CD8-positive, alpha-beta T cell (primary cell): ENCODE measurements at regions of chr11 and their contacts with region 1.

Region 1: DNA sequence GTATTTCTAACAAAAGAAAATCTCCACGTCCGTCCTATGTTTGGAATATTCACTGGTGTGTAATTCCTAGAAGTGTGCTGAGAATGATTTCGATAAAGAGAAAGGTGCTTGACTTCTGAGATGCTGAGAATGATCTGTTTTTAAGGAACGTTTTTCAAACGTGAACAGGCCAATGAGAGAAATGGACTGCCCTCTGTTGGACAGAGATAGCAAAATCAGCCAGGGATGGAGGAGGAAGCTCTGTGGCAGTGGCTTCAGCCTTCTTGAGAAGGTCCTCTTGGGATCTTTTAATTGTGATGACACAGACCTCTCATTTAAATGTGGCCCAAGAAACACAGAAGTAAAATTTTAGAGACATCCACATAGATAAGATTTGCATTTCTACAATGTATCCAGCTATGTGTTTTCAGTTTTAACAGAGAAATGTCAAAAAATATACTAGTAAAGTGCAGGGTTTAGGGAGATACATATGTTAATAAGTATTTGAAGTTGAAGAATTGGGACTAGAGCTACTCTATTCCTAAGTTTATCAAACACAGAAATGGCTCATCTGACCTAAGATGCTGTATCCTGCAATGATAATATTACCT is 84.0 kb upstream of the RCN1 start:
- DNase-seq: peak in 3 of 9 experiments; percentile 5 to 52 (median 43)
- ATAC-seq: no peak
- H3K4me3 ChIP-seq: no peak overlapping the region
- H3K4me3 Mint-ChIP-seq: no peak overlapping the region
- H3K27ac ChIP-seq: no peak overlapping the region
- H3K27ac Mint-ChIP-seq: no peak overlapping the region
- H3K4me1 ChIP-seq: no peaks in the 10 kb centered on the region
- H3K4me1 Mint-ChIP-seq: no peaks in the 10 kb centered on the region
- H3K27me3 ChIP-seq: peaks cover 0 to 5% of the 10 kb centered on the region in 2 experiments
- H3K27me3 Mint-ChIP-seq: peaks cover 25% of the 10 kb centered on the region
- CTCF ChIP-seq: peak; percentile 32

Region 2: DNA sequence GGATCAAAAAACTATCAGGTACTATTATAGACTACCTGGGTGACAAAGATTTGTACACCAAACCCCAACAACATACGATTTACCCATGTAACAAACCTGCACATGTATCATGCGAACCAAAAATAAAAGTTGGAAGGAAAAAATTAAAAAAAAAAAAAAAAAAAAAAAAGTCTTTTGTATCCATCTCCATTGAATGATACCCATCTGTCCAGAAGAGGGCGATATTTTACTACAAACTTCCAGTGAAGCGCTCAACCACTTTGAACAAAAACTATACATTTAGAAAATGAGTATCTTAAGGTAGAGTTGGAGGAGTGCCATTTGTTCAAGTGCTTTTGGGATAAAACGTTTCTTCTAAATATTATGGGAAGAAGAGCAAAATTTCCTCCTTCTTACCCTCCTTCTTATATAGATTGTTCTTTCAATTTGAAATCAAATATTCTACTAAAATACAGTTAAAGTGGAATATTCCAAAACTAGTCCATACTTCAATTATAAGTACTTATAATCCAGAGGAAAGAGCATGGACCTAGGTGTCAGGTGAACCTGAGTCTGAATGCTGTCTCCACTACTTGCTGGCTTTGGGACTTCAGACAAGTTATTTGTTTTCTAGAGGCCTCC is 1660.7 kb before region 1 on chr11:
- CTCF ChIA-PET with region 1: no interaction called
- POLR2A ChIA-PET with region 1: no interaction called
- intact Hi-C with region 1: loop called in 1 of 2 experiments (anchors 5 kb)
- DNase-seq: peak in 2 of 9 experiments; percentile 65 to 75
- ATAC-seq: peak; percentile 58
- H3K4me3 ChIP-seq: no peak overlapping the region
- H3K4me3 Mint-ChIP-seq: no peak overlapping the region
- H3K27ac ChIP-seq: no peak overlapping the region
- H3K27ac Mint-ChIP-seq: no peak overlapping the region
- H3K4me1 ChIP-seq: peaks cover 17% of the 10 kb centered on the region
- H3K4me1 Mint-ChIP-seq: peaks cover 16% of the 10 kb centered on the region
- H3K27me3 ChIP-seq: no peaks in the 10 kb centered on the region
- H3K27me3 Mint-ChIP-seq: no peaks in the 10 kb centered on the region
- CTCF ChIP-seq: peak; percentile 78

Region 3: GRCh38 chr11:31240338-31240904 is 766.5 kb before region 1 on chr11:
- CTCF ChIA-PET with region 1: interaction called, 3 read pairs
- POLR2A ChIA-PET with region 1: no interaction called
- intact Hi-C with region 1: loop called (anchors 5 kb)
- DNase-seq: peak in 4 of 9 experiments; percentile 4 to 49 (median 22)
- ATAC-seq: no peak
- H3K4me3 ChIP-seq: no peak overlapping the region
- H3K4me3 Mint-ChIP-seq: no peak overlapping the region
- H3K27ac ChIP-seq: no peak overlapping the region
- H3K27ac Mint-ChIP-seq: no peak overlapping the region
- H3K4me1 ChIP-seq: no peaks in the 10 kb centered on the region
- H3K4me1 Mint-ChIP-seq: no peaks in the 10 kb centered on the region
- H3K27me3 ChIP-seq: no peaks in the 10 kb centered on the region
- H3K27me3 Mint-ChIP-seq: peaks cover 4% of the 10 kb centered on the region
- CTCF ChIP-seq: peak; percentile 58

Region 4: GRCh38 chr11:31397239-31397834 is 609.6 kb before region 1 on chr11:
- CTCF ChIA-PET with region 1: no interaction called
- POLR2A ChIA-PET with region 1: no interaction called
- intact Hi-C with region 1: loop called in 1 of 2 experiments (anchors 2 kb)
- DNase-seq: peak in 2 of 9 experiments; percentile 22 to 48
- ATAC-seq: no peak
- H3K4me3 ChIP-seq: no peak overlapping the region
- H3K4me3 Mint-ChIP-seq: no peak overlapping the region
- H3K27ac ChIP-seq: no peak overlapping the region
- H3K27ac Mint-ChIP-seq: no peak overlapping the region
- H3K4me1 ChIP-seq: no peaks in the 10 kb centered on the region
- H3K4me1 Mint-ChIP-seq: no peaks in the 10 kb centered on the region
- H3K27me3 ChIP-seq: no peaks in the 10 kb centered on the region
- H3K27me3 Mint-ChIP-seq: no peaks in the 10 kb centered on the region
- CTCF ChIP-seq: peak; percentile 61

Region 5: DNA sequence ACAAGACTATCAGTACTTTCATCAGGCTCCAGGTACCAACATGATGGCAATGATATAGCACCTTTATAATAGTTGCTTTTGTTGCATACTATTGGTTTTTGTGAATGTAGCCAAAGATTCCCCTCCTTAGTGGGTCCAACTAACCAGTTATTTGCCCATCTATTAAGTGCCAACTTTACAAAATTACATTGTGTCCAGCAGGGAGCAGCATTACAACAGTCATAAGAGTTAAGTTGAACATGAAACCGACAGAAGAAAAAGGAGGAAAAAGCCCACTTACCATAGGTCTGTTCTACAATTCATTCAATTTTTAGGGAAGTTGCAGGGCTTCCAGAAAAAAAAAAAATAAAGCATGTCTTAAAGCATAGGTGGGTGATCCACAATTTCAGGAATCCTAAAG is 519.0 kb before region 1 on chr11:
- CTCF ChIA-PET with region 1: no interaction called
- POLR2A ChIA-PET with region 1: no interaction called
- intact Hi-C with region 1: loop called (anchors 2 to 5 kb)
- DNase-seq: peak in 2 of 9 experiments; percentile 35 to 51
- ATAC-seq: no peak
- H3K4me3 ChIP-seq: no peak overlapping the region
- H3K4me3 Mint-ChIP-seq: no peak overlapping the region
- H3K27ac ChIP-seq: no peak overlapping the region
- H3K27ac Mint-ChIP-seq: no peak overlapping the region
- H3K4me1 ChIP-seq: no peaks in the 10 kb centered on the region
- H3K4me1 Mint-ChIP-seq: peaks cover 27% of the 10 kb centered on the region
- H3K27me3 ChIP-seq: no peaks in the 10 kb centered on the region
- H3K27me3 Mint-ChIP-seq: no peaks in the 10 kb centered on the region
- CTCF ChIP-seq: peak; percentile 43

Region 6: GRCh38 chr11:31619980-31620379 is 386.9 kb before region 1 on chr11:
- CTCF ChIA-PET with region 1: no interaction called
- POLR2A ChIA-PET with region 1: no interaction called
- intact Hi-C with region 1: no loop called
- DNase-seq: no peak
- ATAC-seq: no peak
- H3K4me3 ChIP-seq: no peak overlapping the region
- H3K4me3 Mint-ChIP-seq: no peak overlapping the region
- H3K27ac ChIP-seq: no peak overlapping the region
- H3K27ac Mint-ChIP-seq: no peak overlapping the region
- H3K4me1 ChIP-seq: no peaks in the 10 kb centered on the region
- H3K4me1 Mint-ChIP-seq: no peaks in the 10 kb centered on the region
- H3K27me3 ChIP-seq: no peaks in the 10 kb centered on the region
- H3K27me3 Mint-ChIP-seq: no peaks in the 10 kb centered on the region
- CTCF ChIP-seq: no peak

Region 7: GRCh38 chr11:31968461-31969358 is 38.2 kb before region 1 on chr11:
- CTCF ChIA-PET with region 1: no interaction called
- POLR2A ChIA-PET with region 1: no interaction called
- intact Hi-C with region 1: no loop called
- DNase-seq: no peak
- ATAC-seq: no peak
- H3K4me3 ChIP-seq: no peak overlapping the region
- H3K4me3 Mint-ChIP-seq: no peak overlapping the region
- H3K27ac ChIP-seq: no peak overlapping the region
- H3K27ac Mint-ChIP-seq: no peak overlapping the region
- H3K4me1 ChIP-seq: no peaks in the 10 kb centered on the region
- H3K4me1 Mint-ChIP-seq: no peaks in the 10 kb centered on the region
- H3K27me3 ChIP-seq: no peaks in the 10 kb centered on the region
- H3K27me3 Mint-ChIP-seq: peaks cover 13% of the 10 kb centered on the region
- CTCF ChIP-seq: no peak